CD4-positive, alpha-beta memory T cell (primary cell): ENCODE measurements at regions of chrX and their contacts with region 1.

Region 1: GRCh38 chrX:20442597-20442996 is 175.9 kb upstream of the RPS6KA3 start:
- DNase-seq: peak; percentile 78 to 81 (median 79)
- H3K4me3 ChIP-seq: no peak overlapping the region
- H3K4me3 Mint-ChIP-seq: peak overlapping the region in 3 of 8 donors; percentile 24 to 62 (median 25)
- H3K27ac ChIP-seq: no peak overlapping the region
- H3K27ac Mint-ChIP-seq: peak overlapping the region in 6 of 7 donors; percentile 15 to 78 (median 56)
- H3K4me1 ChIP-seq: peaks cover 71% of the 10 kb centered on the region
- H3K4me1 Mint-ChIP-seq: peaks cover 31 to 65% (median 50%) of the 10 kb centered on the region in 4 donors
- H3K27me3 ChIP-seq: no peaks in the 10 kb centered on the region
- H3K27me3 Mint-ChIP-seq: peaks cover 0 to 1% of the 10 kb centered on the region in 2 donors

Region 2: DNA sequence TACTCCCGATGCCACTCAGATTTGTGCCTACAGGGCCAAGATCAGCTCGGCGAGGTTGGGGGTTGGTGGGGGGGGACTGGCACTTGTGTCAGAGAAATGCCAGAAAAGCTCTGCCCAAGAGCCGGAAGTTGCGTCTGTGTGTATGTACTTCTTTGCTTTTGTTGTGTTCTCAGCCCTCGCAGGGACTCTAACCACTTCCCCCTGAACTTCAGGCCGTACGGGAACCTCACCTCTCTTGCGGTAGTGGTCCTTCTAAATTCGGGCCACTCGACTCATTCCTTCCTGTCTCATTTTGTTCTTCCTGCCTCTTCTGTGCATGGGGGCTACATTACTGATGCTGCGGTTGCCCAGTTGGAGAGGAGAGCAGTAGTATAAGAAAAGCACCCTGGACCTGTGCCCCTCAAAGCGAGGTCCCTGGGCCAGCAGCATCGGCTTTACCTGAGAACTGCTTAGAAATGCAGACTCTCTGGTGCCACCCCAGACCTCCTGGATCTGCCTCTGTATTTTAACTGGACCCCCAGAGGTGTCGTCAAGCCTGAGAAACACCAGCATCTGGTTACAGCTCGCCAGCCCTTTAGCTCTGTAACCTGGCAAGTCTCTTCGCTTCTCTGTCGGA is 29.6 kb before region 1 on chrX:
- CTCF ChIA-PET with region 1: interaction called, 4 read pairs
- POLR2A ChIA-PET with region 1: interaction called, 18 read pairs
- intact Hi-C with region 1: no loop called
- DNase-seq: peak; percentile 68 to 77 (median 72)
- H3K4me3 ChIP-seq: peak overlapping the region in 1 of 2 donors; percentile 24
- H3K4me3 Mint-ChIP-seq: peak overlapping the region; percentile 64 to 86 (median 74)
- H3K27ac ChIP-seq: peak overlapping the region; percentile 51
- H3K27ac Mint-ChIP-seq: peak overlapping the region; percentile 84 to 96 (median 93)
- H3K4me1 ChIP-seq: peaks cover 36% of the 10 kb centered on the region
- H3K4me1 Mint-ChIP-seq: peaks cover 20 to 44% (median 28%) of the 10 kb centered on the region in 4 donors
- H3K27me3 ChIP-seq: no peaks in the 10 kb centered on the region
- H3K27me3 Mint-ChIP-seq: no peaks in the 10 kb centered on the region